RWPE1 (cell line): ENCODE measurements at regions of chr9 and their contacts with region 1.

Region 1: DNA sequence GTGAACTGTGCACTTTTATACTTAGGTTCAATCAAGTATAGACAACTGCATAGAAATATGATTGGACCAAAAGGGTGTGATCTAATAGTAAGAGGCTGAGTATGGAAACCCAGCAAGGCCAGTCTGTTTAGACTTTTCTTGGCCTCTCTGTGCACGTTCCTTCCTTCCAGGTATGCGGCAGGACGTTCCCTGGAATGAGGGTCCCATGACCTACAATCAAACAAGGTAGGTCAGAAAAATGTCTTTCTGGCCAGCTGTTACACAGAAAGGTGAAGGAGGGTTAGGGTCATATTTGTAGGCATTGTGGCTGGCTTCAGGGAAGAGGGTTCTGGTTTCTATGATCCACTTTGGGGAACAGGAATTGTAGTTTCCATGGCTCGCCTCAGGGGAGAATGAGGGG is 84.9 kb downstream of the C9orf50 start:
- DNase-seq: no peak
- H3K27ac ChIP-seq: no peak overlapping the region
- CTCF ChIP-seq: no peak

Region 2: GRCh38 chr9:129185991-129186390 is 350.1 kb before region 1 on chr9:
- CTCF ChIA-PET with region 1: no interaction called
- POLR2A ChIA-PET with region 1: no interaction called
- DNase-seq: no peak
- H3K27ac ChIP-seq: no peak overlapping the region
- CTCF ChIP-seq: no peak

Region 3: DNA sequence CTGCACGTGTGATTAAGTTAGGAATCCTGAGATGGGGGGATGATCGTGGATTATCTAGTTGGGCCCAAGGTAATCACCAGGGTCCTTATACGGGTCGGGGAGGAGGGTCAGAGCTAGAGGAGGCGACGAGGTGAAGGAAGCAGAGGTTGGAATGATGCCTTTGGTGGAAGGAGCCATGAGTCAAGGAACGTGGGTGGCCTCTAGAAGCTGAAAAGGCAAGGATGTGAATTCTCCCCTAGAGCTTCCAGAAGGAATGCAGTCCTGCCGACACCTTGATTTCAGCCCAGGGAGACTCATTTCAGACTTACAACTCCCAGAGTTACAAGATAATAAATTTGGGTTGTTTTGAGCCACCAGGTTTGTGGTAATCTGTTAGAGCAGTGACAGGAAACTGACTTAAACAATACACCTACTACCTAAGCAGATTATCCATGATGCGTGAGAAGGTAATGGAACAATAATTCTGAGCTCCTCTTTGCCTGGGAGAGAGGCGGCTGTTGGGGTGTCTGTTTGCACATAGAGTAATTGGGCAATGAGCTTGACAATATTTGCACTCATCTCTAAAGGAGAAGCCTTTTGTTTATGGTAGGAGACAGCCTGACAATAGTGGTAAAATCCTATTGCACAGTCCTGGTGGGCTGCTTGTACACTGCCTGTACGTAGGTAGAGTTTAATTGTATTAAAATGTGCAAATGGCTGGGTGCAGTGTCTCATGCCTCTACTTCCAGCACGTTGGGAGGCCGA is 228.6 kb before region 1 on chr9:
- CTCF ChIA-PET with region 1: no interaction called
- POLR2A ChIA-PET with region 1: no interaction called
- DNase-seq: no peak
- H3K27ac ChIP-seq: no peak overlapping the region
- CTCF ChIP-seq: no peak

Region 4: GRCh38 chr9:129487642-129488409 is 48.2 kb before region 1 on chr9:
- CTCF ChIA-PET with region 1: interaction called, 4 read pairs
- POLR2A ChIA-PET with region 1: interaction called, 11 read pairs
- DNase-seq: no peak
- H3K27ac ChIP-seq: peak overlapping the region; percentile 100
- CTCF ChIP-seq: no peak